ENCODE measurements at regions of chr2 and their contacts with region 1.

Region 1: DNA sequence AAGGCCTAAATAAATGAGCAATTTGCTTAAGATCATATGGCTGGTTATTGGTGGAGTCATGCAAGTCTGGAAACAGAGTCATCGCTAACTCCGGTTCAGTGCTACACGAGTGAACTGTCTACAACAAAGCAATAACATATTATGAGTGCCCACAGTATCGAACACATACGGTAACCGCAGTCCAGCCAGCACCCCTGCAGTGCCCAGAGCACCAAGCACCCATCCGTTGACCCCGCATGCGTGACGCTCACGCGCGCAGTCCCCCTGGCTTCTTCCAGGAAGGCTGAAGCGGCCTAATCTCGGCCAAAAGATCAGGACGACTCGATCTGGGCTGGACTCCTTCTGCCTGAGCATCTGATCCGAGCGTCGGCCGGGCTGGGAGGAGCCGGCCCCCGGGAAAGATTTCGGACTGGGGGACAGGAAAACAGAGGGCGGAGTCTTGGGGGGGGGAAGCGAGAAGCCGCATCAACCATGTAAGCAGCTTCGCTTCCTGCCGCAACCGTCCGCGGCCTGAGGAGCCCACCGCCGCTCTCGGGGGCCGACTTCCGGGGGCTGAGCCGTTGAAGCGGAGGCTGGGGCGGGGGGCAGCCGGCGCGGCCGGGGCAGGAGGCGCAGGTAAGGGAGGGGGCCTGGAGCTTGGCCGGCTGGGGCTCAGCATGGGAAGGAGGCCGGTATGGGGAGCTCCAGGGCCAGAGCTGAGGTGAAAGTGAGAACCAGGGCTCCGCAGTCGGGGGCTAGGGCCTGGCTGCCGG is at the start of gene PIKFYVE:
- DNase-seq: peak; percentile 92 to 98
- ATAC-seq: peak; percentile 97 to 98 (median 97)
- H3K4me3 ChIP-seq: peak within 1 kb of the TSS; percentile 73 to 99 (median 90)
- H3K27ac ChIP-seq: peak within 1 kb of the TSS; percentile 66 to 99 (median 96)
- H3K4me1 ChIP-seq: peaks cover 0 to 41% (median 35%) of the 10 kb centered on the region in 9 donors
- H3K27me3 ChIP-seq: no peaks in the 10 kb centered on the region
- CTCF ChIP-seq: peak in 2 of 9 donors; percentile 16 to 26
- total RNA-seq, gene PIKFYVE: 12.9 to 24.8 (median 18.4) TPM

Region 2: GRCh38 chr2:208315081-208315788 is 49.3 kb after region 1 on chr2:
- intact Hi-C with region 1: loop called in 1 of 10 experiments (anchors 5 kb)
- DNase-seq: no peak
- ATAC-seq: peak in 2 of 8 donors; percentile 26 to 58
- H3K4me3 ChIP-seq: no peak overlapping the region
- H3K27ac ChIP-seq: no peak overlapping the region
- H3K4me1 ChIP-seq: peaks cover 0 to 33% (median 13%) of the 10 kb centered on the region in 9 donors
- H3K27me3 ChIP-seq: no peaks in the 10 kb centered on the region
- CTCF ChIP-seq: no peak